Dendritic cell treated with granulocyte-macrophage colony-stimulating factor and Interleukin-4, amounts not matched to agents 40 ng/mL and 50 ng/mL, for 4 days (primary cell): ENCODE measurements at regions of chr17 and their contacts with region 1.

Region 1: GRCh38 chr17:80414803-80415625 is at the start of gene ENDOV:
- H3K4me3 Mint-ChIP-seq: peak within 1 kb of the TSS; percentile 89
- H3K27ac Mint-ChIP-seq: peak within 1 kb of the TSS; percentile 96
- H3K4me1 Mint-ChIP-seq: peaks cover 38% of the 10 kb centered on the region
- H3K27me3 Mint-ChIP-seq: peaks cover 22% of the 10 kb centered on the region

Region 2: DNA sequence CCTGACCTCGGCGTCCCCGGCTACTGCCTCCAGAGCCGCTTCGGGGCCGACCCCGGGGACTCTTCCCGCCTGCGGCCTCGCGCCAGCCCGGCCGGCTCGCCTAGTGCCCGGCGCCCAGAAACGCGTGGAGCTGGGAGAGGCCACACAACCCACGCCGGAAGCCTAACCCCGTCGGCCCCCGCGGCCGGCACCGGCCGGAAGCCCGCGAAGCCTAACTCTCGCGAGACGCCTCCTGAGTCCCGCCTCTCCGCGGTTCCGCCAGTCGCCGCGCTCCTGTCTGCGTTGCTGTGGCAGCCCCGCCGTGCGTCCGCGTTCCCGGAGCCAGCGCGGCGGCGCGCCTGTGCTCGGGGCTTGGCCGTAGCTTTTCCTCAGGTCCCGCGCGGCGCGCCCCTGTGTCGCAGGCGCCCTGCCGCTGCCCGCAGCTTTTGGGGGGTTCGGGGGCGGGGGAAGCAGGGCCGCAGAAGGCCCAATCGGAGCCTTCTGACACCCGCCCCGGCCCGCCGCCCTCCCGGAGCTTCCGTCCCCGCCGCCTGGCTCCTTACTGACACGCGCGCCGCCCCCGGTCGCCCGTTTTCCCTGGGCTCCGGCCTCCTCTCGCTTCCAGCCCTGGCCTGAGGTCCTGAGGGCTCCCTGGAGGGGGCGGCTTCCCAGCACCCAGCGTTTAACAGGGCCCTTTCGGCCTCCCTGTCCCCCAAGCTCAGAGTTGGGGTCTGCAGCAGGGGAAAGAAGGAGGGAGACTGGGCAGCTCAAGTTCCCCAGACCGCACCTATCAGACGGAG is 39.7 kb after region 1 on chr17:
- intact Hi-C with region 1: loop called (anchors 2 kb)
- H3K4me3 Mint-ChIP-seq: peak overlapping the region; percentile 89
- H3K27ac Mint-ChIP-seq: peak overlapping the region; percentile 96
- H3K4me1 Mint-ChIP-seq: peaks cover 25% of the 10 kb centered on the region
- H3K27me3 Mint-ChIP-seq: peaks cover 24% of the 10 kb centered on the region